H1 (cell line): ENCODE measurements at regions of chr16 and their contacts with region 1.

Region 1: DNA sequence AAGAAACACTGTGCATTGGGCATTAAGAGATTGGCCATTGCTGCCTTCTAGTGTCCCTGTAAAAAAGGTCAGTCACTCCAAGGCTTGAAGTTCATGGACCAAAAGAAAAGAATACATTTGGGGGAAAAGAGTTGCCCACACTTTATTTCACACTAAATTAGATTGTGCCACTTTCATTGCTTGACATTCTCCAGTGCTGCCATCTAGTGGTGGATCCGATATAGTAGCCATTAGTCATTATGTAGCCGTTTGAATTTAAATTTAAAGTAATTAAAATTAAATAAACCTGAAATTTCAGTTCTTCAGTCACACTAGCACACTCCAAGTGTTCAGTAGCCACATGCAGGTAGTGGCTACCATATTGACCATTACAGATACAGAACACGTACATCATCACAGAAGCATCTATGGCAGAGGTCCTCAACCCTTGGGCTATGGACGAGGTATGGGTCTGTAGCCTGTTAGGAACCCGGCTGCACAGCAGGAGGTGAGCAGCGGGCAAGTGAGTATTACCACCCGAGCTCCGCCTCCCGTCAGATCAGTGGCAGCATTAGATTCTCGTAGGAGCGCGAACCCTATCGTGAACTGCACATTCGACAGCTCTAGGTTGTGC is 21.9 kb upstream of the CDH5 start:
- DNase-seq: no peak
- H3K4me3 ChIP-seq: no peak overlapping the region
- H3K27ac ChIP-seq: no peak overlapping the region
- H3K4me1 ChIP-seq: peaks cover 0 to 6% (median under 1%) of the 10 kb centered on the region in 4 experiments; a peak in 2 of 7 replicates
- H3K27me3 ChIP-seq: no peaks in the 10 kb centered on the region
- CTCF ChIP-seq: peak in 2 of 3 experiments; percentile 43 to 49; a peak in 2 of 4 replicates
- EP300 ChIP-seq: no peak
- POLR2A ChIP-seq: no peak
- RAD21 ChIP-seq: peak; percentile 23 to 27; a peak in 2 of 4 replicates

Region 2: DNA sequence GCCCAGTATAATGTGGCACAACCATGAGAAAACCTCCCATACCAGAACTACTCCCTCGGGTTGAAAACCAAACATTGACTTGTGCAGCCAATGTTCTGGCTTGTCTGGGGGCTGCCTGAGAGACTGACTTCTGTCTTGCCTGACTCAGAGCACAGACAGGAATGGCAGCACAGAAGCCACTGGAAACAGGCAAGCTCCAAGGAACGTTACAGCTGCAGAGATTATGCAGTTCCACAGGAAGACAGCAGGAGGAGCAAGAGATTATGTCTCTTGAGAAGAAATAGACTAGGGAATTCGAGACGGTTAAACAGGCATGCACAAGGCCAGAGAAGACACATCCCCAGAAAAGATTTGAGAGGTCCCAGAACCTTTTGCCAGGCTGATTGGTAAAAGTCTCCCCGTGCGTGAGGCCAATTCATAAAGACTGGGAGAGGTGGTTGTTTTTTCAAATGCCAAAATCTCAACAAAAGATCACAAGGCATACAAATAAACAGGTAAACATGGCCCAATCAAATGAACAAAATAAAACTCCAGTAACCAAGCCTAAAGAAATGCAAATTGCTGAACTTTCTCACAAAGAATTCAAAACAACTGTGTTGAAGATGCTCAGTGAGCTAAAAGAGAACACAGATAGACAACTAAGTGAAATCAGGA is 68.7 kb before region 1 on chr16:
- CTCF ChIA-PET with region 1: interaction called, 31 read pairs
- POLR2A ChIA-PET with region 1: no interaction called
- DNase-seq: peak; percentile 50 to 77
- H3K4me3 ChIP-seq: no peak overlapping the region
- H3K27ac ChIP-seq: no peak overlapping the region
- H3K4me1 ChIP-seq: peaks cover 0 to 5% (median 2%) of the 10 kb centered on the region in 4 experiments; a peak in 3 of 7 replicates
- H3K27me3 ChIP-seq: peaks cover 0 to 7% (median 1%) of the 10 kb centered on the region in 4 experiments; a peak in 3 of 7 replicates
- CTCF ChIP-seq: peak; percentile 11 to 83 (median 76)
- EP300 ChIP-seq: no peak
- POLR2A ChIP-seq: no peak
- RAD21 ChIP-seq: peak; percentile 61 to 73

Region 3: GRCh38 chr16:66357153-66357928 is 12.7 kb after region 1 on chr16:
- CTCF ChIA-PET with region 1: interaction called, 193 read pairs
- POLR2A ChIA-PET with region 1: no interaction called
- DNase-seq: peak in 1 of 2 experiments; percentile 27
- H3K4me3 ChIP-seq: no peak overlapping the region
- H3K27ac ChIP-seq: no peak overlapping the region
- H3K4me1 ChIP-seq: peaks cover 0 to 8% (median 1%) of the 10 kb centered on the region in 4 experiments; a peak in 3 of 7 replicates
- H3K27me3 ChIP-seq: peaks cover 0 to 3% (median 0%) of the 10 kb centered on the region in 4 experiments; a peak in 1 of 7 replicates
- CTCF ChIP-seq: peak; percentile 42 to 76 (median 72)
- EP300 ChIP-seq: no peak
- POLR2A ChIP-seq: no peak
- RAD21 ChIP-seq: peak; percentile 44 to 56

Region 4: GRCh38 chr16:66364117-66364967 is 19.7 kb after region 1 on chr16:
- CTCF ChIA-PET with region 1: interaction called, 193 read pairs
- POLR2A ChIA-PET with region 1: no interaction called
- DNase-seq: no peak
- H3K4me3 ChIP-seq: no peak overlapping the region
- H3K27ac ChIP-seq: no peak overlapping the region
- H3K4me1 ChIP-seq: peaks cover 2 to 22% (median 15%) of the 10 kb centered on the region in 4 experiments
- H3K27me3 ChIP-seq: no peaks in the 10 kb centered on the region
- CTCF ChIP-seq: no peak
- EP300 ChIP-seq: no peak
- POLR2A ChIP-seq: no peak
- RAD21 ChIP-seq: no peak